HepG2 (cell line): ENCODE measurements at regions of chr6 and their contacts with region 1.

Region 1: GRCh38 chr6:3052481-3053230 is 15.6 kb upstream of the RIPK1 start:
- DNase-seq: no peak
- ATAC-seq: peak; percentile 35
- H3K4me3 ChIP-seq: peak overlapping the region; percentile 57 to 80 (median 72)
- H3K27ac ChIP-seq: peak overlapping the region; percentile 85
- H3K4me1 ChIP-seq: peaks cover 46% of the 10 kb centered on the region
- H3K27me3 ChIP-seq: peaks cover 0 to 30% of the 10 kb centered on the region in 2 experiments; a peak in 2 of 5 replicates
- CTCF ChIP-seq: no peak; the same call in 1 of the 2 replicates
- EP300 ChIP-seq: 0 out of 4 replicates have a peak, but pooled peaks of 1 of the 2 experiments have one; percentile 19
- POLR2A ChIP-seq: no peak
- RAD21 ChIP-seq: no peak

Region 2: GRCh38 chr6:2952557-2953095 is 100.0 kb before region 1 on chr6:
- CTCF ChIA-PET with region 1: interaction called, 22 read pairs
- POLR2A ChIA-PET with region 1: interaction called, 6 read pairs
- in situ Hi-C with region 1: loop called (anchors 5 kb)
- intact Hi-C with region 1: loop called (anchors 5 kb)
- DNase-seq: peak; percentile 72
- ATAC-seq: peak; percentile 92
- H3K4me3 ChIP-seq: peak overlapping the region in 2 of 3 experiments; percentile 13 to 47; a peak in 5 of 6 replicates
- H3K27ac ChIP-seq: no peak overlapping the region
- H3K4me1 ChIP-seq: peaks cover 29% of the 10 kb centered on the region
- H3K27me3 ChIP-seq: no peaks in the 10 kb centered on the region
- CTCF ChIP-seq: peak; percentile 99
- EP300 ChIP-seq: 0 out of 4 replicates have a peak, but pooled peaks of 1 of the 2 experiments have one; percentile 10
- POLR2A ChIP-seq: no peak
- RAD21 ChIP-seq: peak; percentile 93

Region 3: GRCh38 chr6:3013479-3013878 is 39.2 kb before region 1 on chr6:
- CTCF ChIA-PET with region 1: no interaction called
- POLR2A ChIA-PET with region 1: interaction called, 11 read pairs
- in situ Hi-C with region 1: no loop called
- intact Hi-C with region 1: no loop called
- DNase-seq: no peak
- ATAC-seq: peak; percentile 48; the same call in 2 of the 3 replicates
- H3K4me3 ChIP-seq: no peak overlapping the region
- H3K27ac ChIP-seq: no peak overlapping the region
- H3K4me1 ChIP-seq: peaks cover 27% of the 10 kb centered on the region
- H3K27me3 ChIP-seq: no peaks in the 10 kb centered on the region
- CTCF ChIP-seq: no peak
- EP300 ChIP-seq: no peak
- POLR2A ChIP-seq: no peak
- RAD21 ChIP-seq: no peak

Region 4: GRCh38 chr6:3031857-3032640 is 20.6 kb before region 1 on chr6:
- CTCF ChIA-PET with region 1: no interaction called
- POLR2A ChIA-PET with region 1: interaction called, 13 read pairs
- in situ Hi-C with region 1: no loop called
- intact Hi-C with region 1: loop called (anchors 1 kb)
- DNase-seq: peak; percentile 43
- ATAC-seq: peak; percentile 95
- H3K4me3 ChIP-seq: no peak overlapping the region
- H3K27ac ChIP-seq: no peak overlapping the region
- H3K4me1 ChIP-seq: peaks cover 15% of the 10 kb centered on the region
- H3K27me3 ChIP-seq: peaks cover 0 to 13% of the 10 kb centered on the region in 2 experiments; a peak in 2 of 5 replicates
- CTCF ChIP-seq: peak; percentile 82
- EP300 ChIP-seq: no peak
- POLR2A ChIP-seq: no peak
- RAD21 ChIP-seq: peak; percentile 65